A549 (cell line): ENCODE measurements at regions of chr1 and their contacts with region 1.

Region 1: GRCh38 chr1:64268653-64269557 is 65.5 kb downstream of the UBE2U start:
- DNase-seq: peak; percentile 27 to 83
- ATAC-seq: peak; percentile 84 to 89
- H3K4me3 ChIP-seq: peak overlapping the region; percentile 49
- H3K27ac ChIP-seq: peak overlapping the region in 1 of 2 experiments; percentile 59; a peak in 2 of 6 replicates
- H3K4me1 ChIP-seq: no peaks in the 10 kb centered on the region
- CTCF ChIP-seq: peak; percentile 76
- EP300 ChIP-seq: no peak
- POLR2A ChIP-seq: no peak
- RAD21 ChIP-seq: peak; percentile 90 to 93

Region 2: DNA sequence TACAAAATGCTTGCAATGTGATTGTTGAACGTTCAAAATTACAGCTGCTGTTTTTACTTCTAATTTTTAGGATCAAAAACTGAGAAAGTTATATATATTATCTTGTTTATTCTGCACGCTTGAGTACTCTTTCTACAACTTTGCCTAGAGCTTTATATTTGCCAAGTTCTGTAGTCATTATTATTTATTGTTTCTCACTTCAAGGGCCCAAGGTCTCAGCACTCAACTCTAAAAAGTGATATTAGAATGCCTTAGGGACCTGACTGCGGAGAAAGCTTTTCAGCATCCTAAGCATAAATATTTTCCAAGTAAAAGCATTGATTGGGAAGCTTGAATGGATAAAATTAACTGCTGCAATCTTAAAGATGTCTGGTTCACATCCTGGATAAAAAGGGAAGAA is 18.2 kb after region 1 on chr1:
- CTCF ChIA-PET with region 1: interaction called, 10 read pairs
- POLR2A ChIA-PET with region 1: no interaction called
- DNase-seq: no peak
- ATAC-seq: no peak
- H3K4me3 ChIP-seq: no peak overlapping the region
- H3K27ac ChIP-seq: no peak overlapping the region
- H3K4me1 ChIP-seq: no peaks in the 10 kb centered on the region
- CTCF ChIP-seq: no peak
- EP300 ChIP-seq: no peak
- POLR2A ChIP-seq: no peak
- RAD21 ChIP-seq: no peak

Region 3: GRCh38 chr1:64823691-64824476 is 555.0 kb after region 1 on chr1:
- CTCF ChIA-PET with region 1: interaction called, 20 read pairs
- POLR2A ChIA-PET with region 1: no interaction called
- DNase-seq: peak; percentile 30 to 74
- ATAC-seq: peak; percentile 52 to 78; a peak in 5 of 6 replicates
- H3K4me3 ChIP-seq: no peak overlapping the region
- H3K27ac ChIP-seq: peak overlapping the region in 1 of 2 experiments; percentile 20; a peak in 1 of 6 replicates
- H3K4me1 ChIP-seq: peaks cover 6% of the 10 kb centered on the region; the same call in 1 of the 3 replicates
- CTCF ChIP-seq: peak; percentile 80
- EP300 ChIP-seq: no peak
- POLR2A ChIP-seq: no peak
- RAD21 ChIP-seq: peak; percentile 84 to 88